PC-3 (cell line): ENCODE measurements at regions of chr1 and their contacts with region 1.

Region 1: DNA sequence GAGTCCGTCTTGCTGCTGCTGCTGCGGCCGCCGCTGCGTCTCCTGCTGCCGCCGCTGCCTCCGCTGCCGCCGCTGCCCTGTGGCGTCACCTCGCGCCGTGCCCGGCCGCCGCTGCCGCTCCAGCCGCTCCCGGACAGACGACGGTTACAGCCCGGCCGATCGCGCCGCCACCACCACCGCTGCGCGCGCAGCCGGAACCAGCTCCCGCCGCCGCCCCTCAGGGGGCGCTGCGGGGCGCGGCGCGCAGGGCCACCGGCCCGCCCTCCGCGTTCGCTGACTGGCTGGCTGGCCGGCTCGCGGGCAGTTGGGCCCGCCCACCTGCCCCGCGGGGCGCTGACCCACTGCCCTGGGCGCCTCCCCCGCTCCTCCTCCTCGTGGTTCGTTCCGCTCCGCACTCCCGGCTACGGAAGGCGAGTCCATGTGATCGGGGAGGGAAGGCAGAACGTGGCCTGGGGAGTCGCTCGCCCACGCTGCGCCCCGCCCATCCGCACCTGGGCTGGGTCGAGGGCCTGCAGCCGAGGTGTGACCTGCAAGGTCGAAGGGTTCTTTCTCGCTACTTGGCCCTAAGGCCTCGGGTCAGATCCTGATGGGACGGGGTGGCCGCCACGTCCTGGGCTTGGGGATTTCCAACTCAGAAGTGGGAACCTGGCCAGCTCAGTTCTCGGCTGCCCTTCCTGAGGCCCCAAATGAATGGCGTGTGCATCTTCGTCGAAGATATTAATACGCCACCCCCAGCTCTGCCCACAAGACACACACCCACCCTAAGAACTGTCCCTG is at the start of gene PTP4A2:
- DNase-seq: peak; percentile 95
- ATAC-seq: peak; percentile 74
- H3K4me3 ChIP-seq: peak within 1 kb of the TSS; percentile 80
- H3K27ac ChIP-seq: peak within 1 kb of the TSS; percentile 98
- H3K4me1 ChIP-seq: peaks cover 47% of the 10 kb centered on the region
- H3K27me3 ChIP-seq: no peaks in the 10 kb centered on the region
- CTCF ChIP-seq: no peak
- total RNA-seq, gene PTP4A2: 335 and 340 TPM in 2 replicates

Region 2: DNA sequence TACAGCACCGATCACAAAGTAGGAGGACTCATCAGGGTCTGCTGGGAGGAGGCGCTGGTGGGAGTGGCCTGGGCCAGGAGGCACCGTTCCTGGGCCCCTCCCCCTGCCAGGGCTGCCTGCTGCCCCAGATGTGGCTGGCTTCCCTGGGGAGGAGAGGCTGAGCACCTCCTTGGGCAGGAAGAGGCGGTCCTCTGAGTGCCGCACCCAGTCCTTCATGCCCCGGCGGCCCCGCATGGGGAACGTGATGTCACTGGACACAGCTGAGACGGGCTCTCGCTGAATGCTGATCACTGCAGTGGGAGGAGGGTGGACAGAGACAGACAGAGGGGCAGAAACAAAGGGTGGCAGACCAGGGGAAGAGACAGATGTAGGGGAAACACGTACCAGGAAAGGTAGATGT is 199.0 kb before region 1 on chr1:
- CTCF ChIA-PET with region 1: no interaction called
- POLR2A ChIA-PET with region 1: no interaction called
- intact Hi-C with region 1: no loop called
- DNase-seq: no peak
- ATAC-seq: no peak
- H3K4me3 ChIP-seq: no peak overlapping the region
- H3K27ac ChIP-seq: no peak overlapping the region
- H3K4me1 ChIP-seq: no peaks in the 10 kb centered on the region
- H3K27me3 ChIP-seq: no peaks in the 10 kb centered on the region
- CTCF ChIP-seq: no peak

Region 3: DNA sequence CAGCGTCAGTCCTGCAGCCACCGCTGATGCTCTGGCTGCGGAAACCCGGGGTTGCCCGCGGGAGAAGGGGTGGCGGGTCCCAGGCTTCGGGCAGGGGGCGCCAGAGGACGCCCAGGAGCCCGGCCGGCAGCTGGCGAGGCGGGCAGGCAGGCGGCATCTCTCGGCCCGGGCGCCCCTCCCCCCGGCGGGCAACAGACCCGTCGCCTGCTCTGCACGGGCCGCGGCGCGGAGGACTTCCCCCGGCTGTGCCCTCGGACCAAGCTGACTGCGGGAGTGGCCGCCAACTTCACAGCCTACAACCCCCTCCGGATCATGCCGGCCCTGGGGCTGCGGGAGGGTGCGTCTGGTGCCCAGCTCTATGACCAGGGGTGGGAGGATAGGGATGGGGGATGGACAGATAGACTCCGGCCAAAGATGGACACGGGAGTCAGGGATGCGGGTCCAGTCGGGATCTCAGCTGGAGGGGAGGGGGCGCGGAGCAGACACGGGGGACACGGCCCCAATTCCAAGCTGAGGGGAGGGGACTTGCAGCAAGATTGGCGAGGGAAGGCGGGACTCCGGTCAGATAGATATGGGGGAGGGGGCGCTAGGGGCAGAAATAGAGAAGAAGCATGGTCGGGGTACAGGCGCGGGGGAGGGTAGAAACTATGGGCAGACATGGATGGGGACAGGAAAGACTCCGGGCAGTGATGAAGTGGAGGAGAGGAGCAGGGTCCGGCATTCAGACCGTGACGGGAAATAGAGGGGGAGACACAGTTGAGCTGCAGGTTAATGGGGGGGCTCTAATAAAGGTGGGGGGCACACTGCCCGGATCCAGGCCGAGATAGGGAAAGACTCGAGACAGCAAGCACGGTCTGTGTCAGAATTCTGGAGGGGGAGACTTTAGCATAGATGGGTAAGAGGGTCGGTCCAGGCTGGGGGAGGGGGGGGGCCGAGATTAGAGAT is 175.4 kb before region 1 on chr1:
- CTCF ChIA-PET with region 1: interaction called, 3 read pairs
- POLR2A ChIA-PET with region 1: no interaction called
- intact Hi-C with region 1: loop called (anchors 5 kb)
- DNase-seq: peak; percentile 76
- ATAC-seq: peak; percentile 56
- H3K4me3 ChIP-seq: peak overlapping the region; percentile 78
- H3K27ac ChIP-seq: no peak overlapping the region
- H3K4me1 ChIP-seq: peaks cover 24% of the 10 kb centered on the region
- H3K27me3 ChIP-seq: no peaks in the 10 kb centered on the region
- CTCF ChIP-seq: peak; percentile 69

Region 4: GRCh38 chr1:31815752-31816500 is 122.4 kb before region 1 on chr1 and contains the start of gene SPOCD1:
- CTCF ChIA-PET with region 1: no interaction called
- POLR2A ChIA-PET with region 1: no interaction called
- intact Hi-C with region 1: loop called (anchors 10 kb)
- DNase-seq: peak; percentile 86
- ATAC-seq: peak; percentile 92
- H3K4me3 ChIP-seq: peak within 1 kb of the TSS; percentile 38; the same call in 1 of the 2 replicates
- H3K27ac ChIP-seq: no peak within 1 kb of the TSS
- H3K4me1 ChIP-seq: no peaks in the 10 kb centered on the region
- H3K27me3 ChIP-seq: no peaks in the 10 kb centered on the region
- CTCF ChIP-seq: peak; percentile 92
- total RNA-seq, gene SPOCD1: 4.1 and 5.4 TPM in 2 replicates

Region 5: DNA sequence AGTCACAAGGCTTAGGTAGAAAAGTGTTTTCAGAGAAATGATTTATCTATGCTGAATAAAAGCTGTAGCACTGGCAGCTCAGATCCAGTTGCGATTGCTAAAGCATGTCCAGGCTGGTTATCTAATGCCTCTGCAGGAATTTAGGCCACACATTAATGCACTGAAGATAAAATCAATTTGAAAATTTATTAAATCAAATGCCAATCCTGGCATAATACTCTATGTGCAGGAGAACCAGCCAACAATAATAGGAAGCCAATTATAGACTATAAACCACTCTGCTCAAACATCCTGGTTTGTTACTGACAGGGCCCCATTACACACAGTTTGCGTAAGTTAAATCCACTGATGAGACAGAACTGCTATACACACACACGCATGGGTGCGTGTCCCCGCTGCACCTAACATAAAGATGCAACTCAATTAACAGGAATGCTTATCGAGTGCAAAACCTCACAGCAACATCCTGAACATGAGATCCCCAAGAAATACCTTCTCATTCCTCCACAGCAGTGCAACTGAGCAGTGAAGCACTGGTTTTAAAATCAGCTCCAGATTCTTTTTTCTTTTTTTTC is 40.7 kb before region 1 on chr1:
- CTCF ChIA-PET with region 1: no interaction called
- POLR2A ChIA-PET with region 1: interaction called, 5 read pairs
- intact Hi-C with region 1: loop called (anchors 5 kb)
- DNase-seq: peak; percentile 21
- ATAC-seq: peak; percentile 92
- H3K4me3 ChIP-seq: no peak overlapping the region
- H3K27ac ChIP-seq: peak overlapping the region; percentile 31
- H3K4me1 ChIP-seq: peaks cover 14% of the 10 kb centered on the region
- H3K27me3 ChIP-seq: no peaks in the 10 kb centered on the region
- CTCF ChIP-seq: no peak

Region 6: DNA sequence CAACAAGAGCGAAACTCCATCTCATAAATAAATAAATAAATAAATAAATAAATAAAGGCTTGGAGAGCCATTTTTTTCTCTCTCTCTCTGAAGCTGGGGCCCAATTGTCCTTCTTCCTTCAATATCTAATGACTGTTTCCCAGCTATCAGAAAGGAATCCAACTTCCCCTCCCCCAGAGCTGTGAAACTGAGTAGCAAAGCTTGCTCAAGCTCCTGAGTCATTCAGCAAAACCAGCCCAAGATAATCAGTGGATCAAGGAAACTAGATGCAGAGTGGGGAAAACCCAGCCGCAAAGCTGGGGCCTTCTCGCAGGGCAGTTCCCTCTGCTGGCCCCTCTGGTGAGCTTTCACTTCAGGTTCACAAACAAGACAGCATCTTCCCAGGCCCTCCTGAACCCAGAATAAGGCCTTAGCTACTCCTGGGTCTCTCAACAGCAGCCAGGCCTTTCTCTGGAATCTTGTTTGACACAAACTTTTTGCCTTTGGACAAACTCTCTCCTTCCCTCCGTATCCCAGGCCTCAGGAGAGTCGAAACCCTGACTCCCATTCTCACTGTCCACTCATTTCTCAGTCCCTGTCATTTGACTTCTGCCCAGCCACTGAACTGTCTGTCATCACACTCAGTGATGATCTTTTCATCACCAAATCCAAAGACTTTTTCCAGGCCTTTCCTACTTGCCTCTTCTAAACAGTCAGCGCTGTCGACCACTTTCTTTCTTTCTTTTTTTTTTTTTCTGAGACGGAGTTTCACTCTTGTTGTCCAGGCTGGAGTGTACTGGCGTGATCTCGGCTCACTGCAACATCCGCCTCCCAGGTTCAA is 17.8 kb after region 1 on chr1:
- CTCF ChIA-PET with region 1: interaction called, 10 read pairs
- POLR2A ChIA-PET with region 1: interaction called, 15 read pairs
- intact Hi-C with region 1: loop called (anchors 2 kb)
- DNase-seq: peak; percentile 98
- ATAC-seq: peak; percentile 90
- H3K4me3 ChIP-seq: no peak overlapping the region
- H3K27ac ChIP-seq: peak overlapping the region; percentile 99
- H3K4me1 ChIP-seq: peaks cover 25% of the 10 kb centered on the region
- H3K27me3 ChIP-seq: no peaks in the 10 kb centered on the region
- CTCF ChIP-seq: peak; percentile 48

Region 7: GRCh38 chr1:32001863-32002262 is 63.5 kb after region 1 on chr1:
- CTCF ChIA-PET with region 1: no interaction called
- POLR2A ChIA-PET with region 1: no interaction called
- intact Hi-C with region 1: no loop called
- DNase-seq: no peak
- ATAC-seq: no peak
- H3K4me3 ChIP-seq: no peak overlapping the region
- H3K27ac ChIP-seq: no peak overlapping the region
- H3K4me1 ChIP-seq: no peaks in the 10 kb centered on the region
- H3K27me3 ChIP-seq: no peaks in the 10 kb centered on the region
- CTCF ChIP-seq: no peak

Region 8: DNA sequence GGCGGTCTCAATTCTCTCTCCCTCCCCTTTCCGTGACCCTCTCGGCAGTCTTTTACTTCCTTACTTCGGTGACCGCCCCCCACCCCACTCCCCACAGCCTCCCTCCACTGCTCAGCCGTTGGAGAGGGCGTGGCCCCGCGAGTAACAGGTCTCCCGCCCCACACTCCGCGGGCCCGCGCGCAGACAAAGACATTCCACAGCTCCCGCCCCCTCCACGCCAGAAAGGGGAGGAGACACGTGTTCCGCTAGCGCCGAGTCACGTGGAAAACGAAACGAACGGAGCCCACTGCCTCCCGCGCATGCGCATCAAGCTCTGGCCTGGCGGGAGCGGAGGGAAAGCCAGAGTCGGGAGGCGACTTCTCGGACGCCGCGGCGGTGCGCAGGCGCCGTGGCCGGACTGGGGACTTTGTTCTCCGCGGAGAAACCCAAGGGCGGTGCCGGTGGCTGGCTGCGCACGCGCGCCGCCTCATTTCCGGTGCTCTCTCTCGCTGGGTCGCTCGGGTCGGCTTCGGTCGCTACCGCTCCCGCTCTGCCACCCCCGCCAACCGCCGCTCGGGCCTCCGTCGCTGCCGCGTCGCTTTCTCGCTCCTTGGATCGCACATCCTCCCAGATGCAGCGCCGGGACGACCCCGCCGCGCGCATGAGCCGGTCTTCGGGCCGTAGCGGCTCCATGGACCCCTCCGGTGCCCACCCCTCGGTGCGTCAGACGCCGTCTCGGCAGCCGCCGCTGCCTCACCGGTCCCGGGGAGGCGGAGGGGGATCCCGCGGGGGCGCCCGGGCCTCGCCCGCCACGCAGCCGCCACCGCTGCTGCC is 75.2 kb after region 1 on chr1 and contains the start of gene KHDRBS1:
- CTCF ChIA-PET with region 1: interaction called, 3 read pairs
- POLR2A ChIA-PET with region 1: interaction called, 29 read pairs
- intact Hi-C with region 1: no loop called
- DNase-seq: peak; percentile 99
- ATAC-seq: peak; percentile 84
- H3K4me3 ChIP-seq: peak within 1 kb of the TSS; percentile 97
- H3K27ac ChIP-seq: peak within 1 kb of the TSS; percentile 75
- H3K4me1 ChIP-seq: peaks cover 13% of the 10 kb centered on the region; the same call in 1 of the 2 replicates
- H3K27me3 ChIP-seq: no peaks in the 10 kb centered on the region
- CTCF ChIP-seq: no peak
- total RNA-seq, gene KHDRBS1: 86.7 and 114 TPM in 2 replicates

Region 9: DNA sequence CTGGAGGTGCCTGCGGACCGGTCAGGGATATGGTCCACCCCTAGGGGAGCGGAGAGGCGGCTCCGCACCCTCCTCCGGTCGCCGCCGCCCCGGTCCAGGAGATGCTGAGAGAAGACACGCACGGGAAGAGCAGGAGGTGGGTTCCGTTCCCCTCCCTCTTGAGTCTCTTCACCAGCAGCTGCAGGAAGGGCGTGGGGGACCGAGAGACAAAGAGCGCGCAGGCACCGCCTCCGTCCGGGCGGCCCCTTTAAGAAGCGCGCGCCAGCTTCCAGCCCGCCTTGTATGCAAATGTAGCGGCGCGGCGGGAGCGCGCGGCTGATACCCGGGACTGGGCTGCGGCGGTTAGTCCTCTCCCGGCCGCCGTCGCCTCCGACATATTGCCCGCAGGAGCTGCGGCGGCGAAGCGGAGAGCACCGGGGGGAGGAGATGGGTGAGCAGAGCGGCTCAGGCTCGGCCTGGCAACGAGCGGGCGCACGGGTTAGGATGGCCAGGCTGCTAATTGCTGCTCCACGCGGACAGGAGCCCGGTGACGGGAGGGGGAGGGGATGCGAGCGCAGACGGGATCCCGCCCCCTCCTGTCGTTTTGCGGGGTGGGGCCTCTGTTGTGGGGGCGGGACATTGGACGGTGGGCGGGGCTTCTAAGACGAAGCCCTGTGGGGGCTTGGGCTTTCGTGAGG is 134.4 kb after region 1 on chr1 and contains the start of gene TMEM39B:
- CTCF ChIA-PET with region 1: no interaction called
- POLR2A ChIA-PET with region 1: no interaction called
- intact Hi-C with region 1: no loop called
- DNase-seq: peak; percentile 93
- ATAC-seq: peak; percentile 80
- H3K4me3 ChIP-seq: peak within 1 kb of the TSS; percentile 95
- H3K27ac ChIP-seq: peak within 1 kb of the TSS; percentile 81
- H3K4me1 ChIP-seq: peaks cover 17% of the 10 kb centered on the region
- H3K27me3 ChIP-seq: no peaks in the 10 kb centered on the region
- CTCF ChIP-seq: no peak
- total RNA-seq, gene TMEM39B: 7.7 and 9.4 TPM in 2 replicates